ENCODE measurements at regions of chr6 and their contacts with region 1.

Region 1: GRCh38 chr6:112269114-112269513 is 14.7 kb upstream of the LAMA4 start:
- DNase-seq: no peak
- ATAC-seq: peak; percentile 73
- H3K4me3 ChIP-seq: no peak overlapping the region
- H3K27ac ChIP-seq: no peak overlapping the region
- H3K4me1 ChIP-seq: no peaks in the 10 kb centered on the region
- H3K27me3 ChIP-seq: no peaks in the 10 kb centered on the region

Region 2: DNA sequence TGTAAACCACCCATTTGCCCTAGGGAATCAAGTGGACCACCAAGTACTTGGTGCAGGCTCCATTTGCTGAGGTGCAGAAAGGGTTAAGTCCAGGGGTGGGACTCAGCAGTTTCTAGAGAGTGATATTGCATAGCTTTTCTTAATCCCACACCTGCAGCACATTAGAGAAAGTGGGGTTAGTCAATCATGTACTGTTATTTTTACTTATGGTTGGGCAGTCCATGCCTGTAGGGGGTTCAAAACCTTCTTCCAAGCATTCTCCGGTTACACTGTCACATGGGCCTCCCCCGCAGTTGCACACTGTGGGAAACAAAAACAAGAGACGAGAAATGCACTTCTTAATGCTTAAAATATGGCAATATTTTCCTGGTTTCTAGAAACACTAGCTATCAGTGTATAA is 80.2 kb before region 1 on chr6:
- intact Hi-C with region 1: loop called in 1 of 2 experiments (anchors 5 kb)
- DNase-seq: no peak
- ATAC-seq: no peak
- H3K4me3 ChIP-seq: no peak overlapping the region
- H3K27ac ChIP-seq: no peak overlapping the region
- H3K4me1 ChIP-seq: peaks cover 0 to 2% of the 10 kb centered on the region in 2 donors
- H3K27me3 ChIP-seq: no peaks in the 10 kb centered on the region

Region 3: DNA sequence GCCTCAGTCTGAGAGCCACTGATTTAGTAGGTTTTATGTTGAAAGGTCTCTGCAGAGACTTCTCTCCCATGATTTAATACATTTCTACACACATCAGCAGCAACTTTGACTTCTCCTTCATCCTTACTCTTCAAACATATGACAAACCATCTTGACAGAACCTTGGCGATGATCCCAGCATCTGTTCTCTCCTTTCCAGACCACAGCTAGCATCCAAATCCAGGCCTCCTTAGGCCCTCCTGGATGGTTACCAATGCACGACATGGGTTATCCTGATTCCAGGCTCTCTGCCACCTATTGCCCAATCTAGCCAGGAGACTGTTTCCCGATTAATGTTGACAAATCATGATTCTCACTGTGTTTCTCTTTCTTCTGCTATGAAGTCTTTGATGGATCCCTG is 31.5 kb before region 1 on chr6:
- intact Hi-C with region 1: no loop called
- DNase-seq: peak in 1 of 2 donors; percentile 75
- ATAC-seq: peak; percentile 77
- H3K4me3 ChIP-seq: no peak overlapping the region
- H3K27ac ChIP-seq: peak overlapping the region in 1 of 2 donors; percentile 56
- H3K4me1 ChIP-seq: peaks cover 3 to 5% of the 10 kb centered on the region in 2 donors
- H3K27me3 ChIP-seq: no peaks in the 10 kb centered on the region

Region 4: GRCh38 chr6:112253841-112254816 is 15.0 kb before region 1 on chr6 and contains the start of gene LAMA4:
- intact Hi-C with region 1: no loop called
- DNase-seq: peak; percentile 56 to 84
- ATAC-seq: peak; percentile 73
- H3K4me3 ChIP-seq: peak within 1 kb of the TSS; percentile 79 to 81
- H3K27ac ChIP-seq: peak within 1 kb of the TSS in 1 of 2 donors; percentile 61
- H3K4me1 ChIP-seq: peaks cover 2 to 4% of the 10 kb centered on the region in 2 donors
- H3K27me3 ChIP-seq: no peaks in the 10 kb centered on the region
- total RNA-seq, gene LAMA4: 71.4 to 150 TPM

Region 5: DNA sequence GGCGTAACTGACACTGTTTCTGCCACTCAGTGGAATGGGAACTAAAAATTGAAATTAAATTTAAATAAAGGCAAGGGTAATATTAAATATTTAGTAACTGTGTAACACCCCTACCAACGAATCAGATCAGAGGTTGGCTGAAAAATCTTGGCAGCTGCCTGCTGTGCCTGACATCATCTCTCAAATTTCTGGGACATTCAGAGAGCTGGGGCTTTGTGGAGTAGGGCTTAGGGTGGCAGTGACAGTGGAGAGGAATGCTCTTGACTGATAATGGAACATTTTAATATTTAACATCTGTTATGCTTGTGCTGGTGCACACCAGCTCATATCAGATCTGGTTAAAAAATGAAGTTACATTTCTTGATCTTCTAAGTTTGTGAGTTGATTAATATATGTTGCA is 140.2 kb after region 1 on chr6:
- intact Hi-C with region 1: no loop called
- DNase-seq: no peak
- ATAC-seq: no peak
- H3K4me3 ChIP-seq: no peak overlapping the region
- H3K27ac ChIP-seq: no peak overlapping the region
- H3K4me1 ChIP-seq: no peaks in the 10 kb centered on the region
- H3K27me3 ChIP-seq: no peaks in the 10 kb centered on the region